PC-3 (cell line): ENCODE measurements at regions of chr19 and their contacts with region 1.

Region 1: GRCh38 chr19:10269333-10270179 is 1.4 kb upstream of the ICAM1 start:
- DNase-seq: peak; percentile 88
- ATAC-seq: peak; percentile 70
- H3K4me3 ChIP-seq: peak overlapping the region; percentile 64
- H3K27ac ChIP-seq: no peak overlapping the region
- H3K4me1 ChIP-seq: peaks cover 23% of the 10 kb centered on the region
- H3K27me3 ChIP-seq: no peaks in the 10 kb centered on the region
- CTCF ChIP-seq: peak; percentile 95

Region 2: GRCh38 chr19:10292206-10292788 is 22.7 kb after region 1 on chr19:
- CTCF ChIA-PET with region 1: interaction called, 12 read pairs
- POLR2A ChIA-PET with region 1: interaction called, 6 read pairs
- intact Hi-C with region 1: no loop called
- DNase-seq: peak; percentile 83
- ATAC-seq: peak; percentile 49
- H3K4me3 ChIP-seq: peak overlapping the region; percentile 69
- H3K27ac ChIP-seq: no peak overlapping the region
- H3K4me1 ChIP-seq: peaks cover 29% of the 10 kb centered on the region
- H3K27me3 ChIP-seq: peaks cover 19% of the 10 kb centered on the region; the same call in 1 of the 2 replicates
- CTCF ChIP-seq: no peak

Region 3: DNA sequence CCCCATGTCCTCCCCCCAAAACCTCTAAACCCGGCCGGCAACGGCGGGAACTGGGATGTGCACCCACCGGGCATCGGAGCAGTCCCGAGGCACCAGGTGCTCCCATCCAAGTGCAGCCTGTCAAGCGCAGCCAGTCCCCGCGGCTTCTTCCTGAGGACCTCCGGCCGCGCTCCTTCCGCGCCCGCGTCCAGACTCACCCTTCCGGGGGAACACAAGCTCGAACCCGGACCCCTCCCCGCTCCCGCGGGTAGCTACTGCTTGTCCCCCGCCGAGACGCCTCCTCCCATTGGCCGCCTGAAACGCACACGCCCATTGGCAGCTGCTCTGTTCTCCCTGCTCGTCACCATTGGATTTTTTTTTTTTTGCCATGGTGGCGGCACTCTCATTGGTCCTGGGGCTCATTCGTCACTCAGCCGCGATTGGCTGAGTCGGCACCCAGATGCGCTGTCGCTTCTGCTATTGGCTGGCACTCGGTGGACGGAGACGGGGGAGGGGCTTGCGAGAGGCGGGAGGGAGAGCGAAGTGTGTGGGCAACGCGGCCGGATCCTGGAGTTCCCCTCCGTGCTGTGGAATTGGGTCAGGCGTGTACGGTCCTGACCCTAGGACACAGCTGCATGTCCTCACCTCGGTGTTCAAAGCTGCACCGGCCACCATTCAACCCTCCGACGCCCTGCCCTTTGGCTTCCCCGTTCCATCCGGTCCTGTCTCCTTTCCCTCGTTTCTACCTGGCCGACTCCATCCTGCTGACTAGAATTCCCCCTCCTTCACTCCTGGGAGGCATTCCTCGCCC is 111.0 kb after region 1 on chr19 and contains the start of gene TYK2:
- CTCF ChIA-PET with region 1: interaction called, 12 read pairs
- POLR2A ChIA-PET with region 1: interaction called, 6 read pairs
- intact Hi-C with region 1: no loop called
- DNase-seq: peak; percentile 100
- ATAC-seq: peak; percentile 94
- H3K4me3 ChIP-seq: peak within 1 kb of the TSS; percentile 91
- H3K27ac ChIP-seq: peak within 1 kb of the TSS; percentile 40
- H3K4me1 ChIP-seq: peaks cover 9% of the 10 kb centered on the region
- H3K27me3 ChIP-seq: no peaks in the 10 kb centered on the region
- CTCF ChIP-seq: no peak
- total RNA-seq, gene TYK2: 177 and 201 TPM in 2 replicates

Region 4: GRCh38 chr19:10388957-10389356 is 119.4 kb after region 1 on chr19:
- CTCF ChIA-PET with region 1: interaction called, 62 read pairs
- POLR2A ChIA-PET with region 1: no interaction called
- intact Hi-C with region 1: loop called (anchors 1 kb)
- DNase-seq: peak; percentile 94
- ATAC-seq: peak; percentile 77
- H3K4me3 ChIP-seq: no peak overlapping the region
- H3K27ac ChIP-seq: no peak overlapping the region
- H3K4me1 ChIP-seq: no peaks in the 10 kb centered on the region
- H3K27me3 ChIP-seq: no peaks in the 10 kb centered on the region
- CTCF ChIP-seq: peak; percentile 98

Region 5: GRCh38 chr19:10461047-10461790 is 191.7 kb after region 1 on chr19:
- CTCF ChIA-PET with region 1: no interaction called
- POLR2A ChIA-PET with region 1: no interaction called
- intact Hi-C with region 1: no loop called
- DNase-seq: peak; percentile 94
- ATAC-seq: peak; percentile 100
- H3K4me3 ChIP-seq: peak overlapping the region; percentile 47; the same call in 1 of the 2 replicates
- H3K27ac ChIP-seq: no peak overlapping the region
- H3K4me1 ChIP-seq: 0 out of 2 replicates have a peak, but pooled peaks cover 5% of the 10 kb centered on the region
- H3K27me3 ChIP-seq: no peaks in the 10 kb centered on the region
- CTCF ChIP-seq: no peak

Region 6: GRCh38 chr19:10593820-10594637 is 324.5 kb after region 1 on chr19:
- CTCF ChIA-PET with region 1: no interaction called
- POLR2A ChIA-PET with region 1: no interaction called
- intact Hi-C with region 1: no loop called
- DNase-seq: no peak
- ATAC-seq: no peak; the same call in 1 of the 2 replicates
- H3K4me3 ChIP-seq: no peak overlapping the region
- H3K27ac ChIP-seq: no peak overlapping the region
- H3K4me1 ChIP-seq: no peaks in the 10 kb centered on the region
- H3K27me3 ChIP-seq: no peaks in the 10 kb centered on the region
- CTCF ChIP-seq: no peak